GM12878 (cell line): ENCODE measurements at regions of chr12 and their contacts with region 1.

Region 1: GRCh38 chr12:75641031-75641780 is 129.8 kb upstream of the KRR1 start:
- DNase-seq: peak; percentile 87
- ATAC-seq: peak; percentile 96
- H3K4me3 ChIP-seq: no peak overlapping the region
- H3K27ac ChIP-seq: peak overlapping the region; percentile 76
- H3K4me1 ChIP-seq: peaks cover 22% of the 10 kb centered on the region
- H3K27me3 ChIP-seq: no peaks in the 10 kb centered on the region
- CTCF ChIP-seq: no peak
- EP300 ChIP-seq: peak; percentile 91 to 92
- POLR2A ChIP-seq: no peak
- RAD21 ChIP-seq: peak; percentile 40; the same call in 1 of the 2 replicates

Region 2: DNA sequence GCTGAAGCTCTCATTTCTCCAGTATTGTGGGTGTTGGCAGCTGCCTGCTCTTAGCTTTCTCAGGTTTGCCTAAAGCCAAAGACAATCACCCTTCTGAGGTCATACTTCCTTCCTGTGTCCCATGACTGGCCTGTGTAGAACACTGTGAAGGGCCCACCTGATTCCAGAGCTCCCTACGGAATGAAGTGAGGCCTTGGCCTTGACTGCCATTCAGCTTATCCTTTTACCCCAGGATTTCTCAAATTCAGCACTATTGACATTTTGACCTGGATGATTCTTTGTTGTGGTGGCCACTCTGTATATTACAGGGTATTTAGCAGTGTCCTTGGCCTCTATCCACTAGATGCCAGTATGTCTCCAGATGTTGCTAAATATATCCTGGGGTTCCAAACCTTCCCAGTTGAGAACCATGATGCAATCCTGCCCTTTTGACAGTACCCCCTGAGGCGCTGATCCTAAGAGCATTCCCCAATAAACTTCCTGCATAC is 17.5 kb before region 1 on chr12:
- CTCF ChIA-PET with region 1: interaction called, 11 read pairs
- POLR2A ChIA-PET with region 1: no interaction called
- RAD21 ChIA-PET with region 1: interaction called, 6 read pairs
- SMC1A ChIA-PET with region 1: interaction called, 21 read pairs
- in situ Hi-C with region 1: no loop called
- intact Hi-C with region 1: no loop called
- DNase-seq: no peak
- ATAC-seq: peak; percentile 54
- H3K4me3 ChIP-seq: no peak overlapping the region
- H3K27ac ChIP-seq: no peak overlapping the region
- H3K4me1 ChIP-seq: no peaks in the 10 kb centered on the region
- H3K27me3 ChIP-seq: no peaks in the 10 kb centered on the region
- CTCF ChIP-seq: peak in 1 of 3 experiments; percentile 12; a peak in 1 of 6 replicates
- EP300 ChIP-seq: no peak
- POLR2A ChIP-seq: no peak
- RAD21 ChIP-seq: peak; percentile 34; the same call in 1 of the 2 replicates

Region 3: GRCh38 chr12:75722714-75723200 is 81.6 kb after region 1 on chr12:
- CTCF ChIA-PET with region 1: no interaction called
- POLR2A ChIA-PET with region 1: no interaction called
- RAD21 ChIA-PET with region 1: no interaction called
- SMC1A ChIA-PET with region 1: no interaction called
- in situ Hi-C with region 1: no loop called
- intact Hi-C with region 1: loop called (anchors 5 kb)
- DNase-seq: peak; percentile 28
- ATAC-seq: peak; percentile 94
- H3K4me3 ChIP-seq: no peak overlapping the region
- H3K27ac ChIP-seq: no peak overlapping the region
- H3K4me1 ChIP-seq: no peaks in the 10 kb centered on the region
- H3K27me3 ChIP-seq: no peaks in the 10 kb centered on the region
- CTCF ChIP-seq: no peak
- EP300 ChIP-seq: no peak; a peak in 1 of 4 replicates
- POLR2A ChIP-seq: no peak
- RAD21 ChIP-seq: no peak

Region 4: DNA sequence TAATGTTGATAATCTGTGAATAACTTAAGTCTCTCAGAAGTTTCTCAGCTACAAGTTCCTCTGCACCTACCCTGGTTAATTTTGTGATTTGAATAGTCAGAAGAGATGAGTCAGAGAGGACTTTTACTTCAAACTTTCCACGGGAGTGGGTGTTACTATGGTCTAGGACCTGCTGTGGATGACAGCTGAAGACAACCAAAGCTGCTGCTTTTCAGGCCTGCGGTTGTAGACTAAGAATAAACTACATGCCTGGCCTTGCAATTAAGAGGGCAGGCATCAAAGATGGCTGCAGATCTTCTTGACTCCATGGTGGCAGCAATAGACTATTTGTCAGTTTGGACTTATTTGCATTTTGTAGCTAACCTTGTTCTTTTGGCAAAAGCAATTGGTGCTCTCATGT is 97.3 kb after region 1 on chr12:
- CTCF ChIA-PET with region 1: interaction called, 10 read pairs
- POLR2A ChIA-PET with region 1: interaction called, 4 read pairs
- RAD21 ChIA-PET with region 1: interaction called, 7 read pairs
- SMC1A ChIA-PET with region 1: interaction called, 8 read pairs
- in situ Hi-C with region 1: no loop called
- intact Hi-C with region 1: no loop called
- DNase-seq: peak; percentile 16
- ATAC-seq: peak; percentile 96
- H3K4me3 ChIP-seq: no peak overlapping the region
- H3K27ac ChIP-seq: no peak overlapping the region
- H3K4me1 ChIP-seq: no peaks in the 10 kb centered on the region
- H3K27me3 ChIP-seq: no peaks in the 10 kb centered on the region
- CTCF ChIP-seq: no peak
- EP300 ChIP-seq: 0 out of 4 replicates have a peak, but pooled peaks have one; percentile 13 to 36
- POLR2A ChIP-seq: no peak
- RAD21 ChIP-seq: no peak

Region 5: DNA sequence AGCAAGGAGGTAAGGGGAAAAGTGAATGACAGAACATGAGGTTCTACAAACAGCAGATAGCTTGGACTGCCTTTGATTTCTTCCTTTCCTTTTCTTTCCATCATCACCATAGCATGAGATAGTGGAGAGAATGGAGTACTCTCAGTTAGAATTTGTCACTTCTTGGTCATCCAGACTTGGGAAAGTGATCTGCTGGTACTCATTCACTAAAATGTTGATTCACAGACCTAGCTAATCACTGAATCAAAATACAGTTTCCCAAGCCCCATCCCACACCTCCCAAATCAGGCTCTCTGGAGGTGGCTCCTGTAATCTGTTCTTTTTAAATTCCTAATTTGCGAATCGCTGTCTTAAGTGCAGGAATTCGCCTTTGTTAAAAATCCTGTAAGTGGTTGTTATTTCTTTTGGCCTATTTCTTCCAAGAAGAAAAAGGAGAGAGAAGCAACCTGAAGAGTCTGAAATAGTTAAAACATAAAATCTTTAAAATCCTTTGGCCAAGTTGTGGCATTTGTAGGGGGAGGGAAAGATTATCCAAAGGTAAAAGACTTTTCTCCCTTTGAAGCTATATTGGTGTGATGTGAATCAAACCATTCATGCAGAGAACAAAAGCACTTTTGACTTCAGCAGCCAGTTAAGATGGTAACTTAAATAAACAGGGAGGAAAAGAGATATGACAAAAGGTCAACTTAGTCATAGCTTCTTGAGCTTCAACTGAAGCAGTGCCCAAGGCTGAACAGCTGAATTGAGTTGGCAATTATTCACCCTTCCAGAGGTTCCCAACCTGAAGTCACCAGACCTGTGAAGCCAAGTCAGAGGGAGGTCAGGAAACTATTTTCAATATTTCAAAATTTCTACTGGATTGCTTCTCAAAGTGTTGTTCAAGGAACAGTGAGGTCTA is 125.3 kb after region 1 on chr12:
- CTCF ChIA-PET with region 1: interaction called, 3 read pairs
- POLR2A ChIA-PET with region 1: no interaction called
- RAD21 ChIA-PET with region 1: interaction called, 6 read pairs
- SMC1A ChIA-PET with region 1: interaction called, 10 read pairs
- in situ Hi-C with region 1: no loop called
- intact Hi-C with region 1: no loop called
- DNase-seq: no peak
- ATAC-seq: no peak
- H3K4me3 ChIP-seq: no peak overlapping the region
- H3K27ac ChIP-seq: no peak overlapping the region
- H3K4me1 ChIP-seq: no peaks in the 10 kb centered on the region
- H3K27me3 ChIP-seq: no peaks in the 10 kb centered on the region
- CTCF ChIP-seq: no peak
- EP300 ChIP-seq: no peak
- POLR2A ChIP-seq: no peak
- RAD21 ChIP-seq: no peak

Region 6: GRCh38 chr12:75774261-75775052 is 133.3 kb after region 1 on chr12:
- CTCF ChIA-PET with region 1: no interaction called
- POLR2A ChIA-PET with region 1: no interaction called
- RAD21 ChIA-PET with region 1: interaction called, 4 read pairs
- SMC1A ChIA-PET with region 1: interaction called, 21 read pairs
- in situ Hi-C with region 1: no loop called
- intact Hi-C with region 1: no loop called
- DNase-seq: no peak
- ATAC-seq: peak; percentile 85
- H3K4me3 ChIP-seq: no peak overlapping the region
- H3K27ac ChIP-seq: no peak overlapping the region
- H3K4me1 ChIP-seq: peaks cover 6% of the 10 kb centered on the region; the same call in 1 of the 2 replicates
- H3K27me3 ChIP-seq: no peaks in the 10 kb centered on the region
- CTCF ChIP-seq: no peak
- EP300 ChIP-seq: no peak
- POLR2A ChIP-seq: no peak
- RAD21 ChIP-seq: no peak

Region 7: GRCh38 chr12:75933101-75933500 is 291.9 kb after region 1 on chr12:
- CTCF ChIA-PET with region 1: interaction called, 7 read pairs
- POLR2A ChIA-PET with region 1: interaction called, 4 read pairs
- RAD21 ChIA-PET with region 1: interaction called, 32 read pairs
- SMC1A ChIA-PET with region 1: interaction called, 15 read pairs
- in situ Hi-C with region 1: no loop called
- intact Hi-C with region 1: loop called (anchors 10 kb)
- DNase-seq: no peak
- ATAC-seq: no peak
- H3K4me3 ChIP-seq: no peak overlapping the region
- H3K27ac ChIP-seq: no peak overlapping the region
- H3K4me1 ChIP-seq: peaks cover 12% of the 10 kb centered on the region
- H3K27me3 ChIP-seq: no peaks in the 10 kb centered on the region
- CTCF ChIP-seq: no peak
- EP300 ChIP-seq: no peak
- POLR2A ChIP-seq: no peak
- RAD21 ChIP-seq: no peak